ENCODE measurements at regions of chr3 and their contacts with region 1.

Region 1: GRCh38 chr3:29280404-29281093 is at the start of gene RBMS3:
- DNase-seq: peak; percentile 90
- ATAC-seq: peak; percentile 95
- total RNA-seq, gene RBMS3: 32.7 TPM

Region 2: GRCh38 chr3:28155631-28156030 is 1124.9 kb before region 1 on chr3:
- intact Hi-C with region 1: no loop called
- DNase-seq: no peak
- ATAC-seq: no peak

Region 3: DNA sequence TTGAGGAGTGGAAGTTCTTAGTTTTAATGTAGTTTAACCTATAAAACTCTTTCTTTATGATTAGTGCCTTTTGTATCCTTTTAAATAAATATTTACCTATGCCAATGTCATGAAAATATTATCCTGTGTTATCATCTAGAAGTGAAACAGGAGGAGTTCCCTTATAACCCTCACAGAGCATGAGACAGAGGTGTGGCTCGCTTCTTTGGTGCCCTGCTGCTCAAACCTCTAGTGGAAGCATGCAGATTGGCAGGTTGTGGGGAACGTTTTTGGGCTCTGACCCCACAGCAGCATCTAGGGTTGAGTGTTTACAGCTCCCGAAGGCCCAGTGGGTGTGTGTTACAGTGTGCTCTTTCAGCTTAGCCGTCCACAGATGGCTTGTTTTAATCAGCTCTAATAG is 472.5 kb before region 1 on chr3:
- intact Hi-C with region 1: no loop called
- DNase-seq: no peak
- ATAC-seq: no peak

Region 4: GRCh38 chr3:29176501-29176900 is 104.0 kb before region 1 on chr3:
- intact Hi-C with region 1: loop called (anchors 5 kb)
- DNase-seq: no peak
- ATAC-seq: peak; percentile 62

Region 5: GRCh38 chr3:29427266-29428103 is 146.9 kb after region 1 on chr3:
- intact Hi-C with region 1: loop called (anchors 5 kb)
- DNase-seq: no peak
- ATAC-seq: peak; percentile 81

Region 6: GRCh38 chr3:29642393-29643033 is 362.0 kb after region 1 on chr3:
- intact Hi-C with region 1: loop called (anchors 2 kb)
- DNase-seq: peak; percentile 45
- ATAC-seq: peak; percentile 87

Region 7: GRCh38 chr3:29764603-29765254 is 484.2 kb after region 1 on chr3:
- intact Hi-C with region 1: loop called (anchors 2 kb)
- DNase-seq: no peak
- ATAC-seq: peak; percentile 65

Measured in Right ventricle myocardium inferior (tissue), 1 donor.